Activated CD4-positive, alpha-beta T cell treated with anti-CD3 and anti-CD28 coated beads for 36 hours (primary cell): ENCODE measurements at regions of chr18 and their contacts with region 1.

Region 1: GRCh38 chr18:46474487-46475389 is 182.3 kb downstream of the LOXHD1 start:
- DNase-seq: no peak
- ATAC-seq: no peak
- H3K4me3 Mint-ChIP-seq: no peak overlapping the region
- H3K27ac Mint-ChIP-seq: no peak overlapping the region
- H3K4me1 Mint-ChIP-seq: no peaks in the 10 kb centered on the region
- H3K27me3 Mint-ChIP-seq: peaks cover 2% of the 10 kb centered on the region

Region 2: DNA sequence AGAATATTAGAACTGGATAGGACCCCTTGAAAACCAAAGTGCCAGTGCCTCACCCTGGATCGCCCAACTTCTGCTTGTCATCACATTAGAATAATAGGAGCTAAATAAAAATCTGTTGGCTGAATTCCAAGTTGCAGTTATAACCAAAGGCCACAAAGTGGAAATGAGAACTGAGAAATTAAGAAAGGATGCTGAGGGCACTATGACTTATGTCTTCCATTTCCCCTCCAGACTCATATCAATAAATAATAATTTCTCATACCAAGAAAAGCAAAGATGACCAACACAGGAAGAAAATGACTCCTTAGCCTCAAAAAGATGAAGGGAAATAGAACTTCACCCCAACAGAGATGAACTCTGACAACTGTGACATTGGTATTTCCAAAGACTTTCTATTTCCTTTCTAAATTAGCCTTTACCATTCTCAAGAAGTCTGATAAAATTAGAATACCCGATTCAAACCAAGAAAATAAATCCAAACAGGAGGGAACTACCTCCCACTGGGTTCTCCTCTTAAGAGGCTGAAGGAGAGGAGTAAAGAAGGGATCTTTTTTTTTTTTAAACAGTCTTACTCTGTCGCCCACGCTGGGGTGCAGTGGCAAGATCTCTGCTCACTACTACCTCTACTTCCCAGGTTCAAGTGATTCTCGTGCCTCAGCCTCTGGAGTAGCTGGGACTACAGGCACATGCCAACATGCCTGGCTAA is 461.1 kb before region 1 on chr18:
- CTCF ChIA-PET with region 1: no interaction called
- POLR2A ChIA-PET with region 1: no interaction called
- intact Hi-C with region 1: no loop called
- DNase-seq: peak; percentile 16
- ATAC-seq: peak; percentile 91
- H3K4me3 Mint-ChIP-seq: peak overlapping the region; percentile 20
- H3K27ac Mint-ChIP-seq: no peak overlapping the region
- H3K4me1 Mint-ChIP-seq: peaks cover 18% of the 10 kb centered on the region
- H3K27me3 Mint-ChIP-seq: no peaks in the 10 kb centered on the region

Region 3: GRCh38 chr18:46424898-46425297 is 49.8 kb before region 1 on chr18:
- CTCF ChIA-PET with region 1: no interaction called
- POLR2A ChIA-PET with region 1: no interaction called
- intact Hi-C with region 1: loop called in 1 of 2 experiments (anchors 5 kb)
- DNase-seq: no peak
- ATAC-seq: no peak
- H3K4me3 Mint-ChIP-seq: no peak overlapping the region
- H3K27ac Mint-ChIP-seq: no peak overlapping the region
- H3K4me1 Mint-ChIP-seq: peaks cover 2% of the 10 kb centered on the region
- H3K27me3 Mint-ChIP-seq: no peaks in the 10 kb centered on the region